K562 (cell line): ENCODE measurements at regions of chr4 and their contacts with region 1.

Region 1: GRCh38 chr4:151117371-151117962 is 18.0 kb downstream of the RPS3A start:
- DNase-seq: peak; percentile 56 to 69 (median 59)
- ATAC-seq: peak; percentile 85
- H3K4me3 ChIP-seq: no peak overlapping the region
- H3K27ac ChIP-seq: no peak overlapping the region
- H3K4me1 ChIP-seq: no peaks in the 10 kb centered on the region
- H3K27me3 ChIP-seq: no peaks in the 10 kb centered on the region; a peak in 1 of 5 replicates
- CTCF ChIP-seq: peak; percentile 57 to 87 (median 77)
- EP300 ChIP-seq: no peak
- POLR2A ChIP-seq: no peak
- RAD21 ChIP-seq: peak; percentile 71 to 78

Region 2: DNA sequence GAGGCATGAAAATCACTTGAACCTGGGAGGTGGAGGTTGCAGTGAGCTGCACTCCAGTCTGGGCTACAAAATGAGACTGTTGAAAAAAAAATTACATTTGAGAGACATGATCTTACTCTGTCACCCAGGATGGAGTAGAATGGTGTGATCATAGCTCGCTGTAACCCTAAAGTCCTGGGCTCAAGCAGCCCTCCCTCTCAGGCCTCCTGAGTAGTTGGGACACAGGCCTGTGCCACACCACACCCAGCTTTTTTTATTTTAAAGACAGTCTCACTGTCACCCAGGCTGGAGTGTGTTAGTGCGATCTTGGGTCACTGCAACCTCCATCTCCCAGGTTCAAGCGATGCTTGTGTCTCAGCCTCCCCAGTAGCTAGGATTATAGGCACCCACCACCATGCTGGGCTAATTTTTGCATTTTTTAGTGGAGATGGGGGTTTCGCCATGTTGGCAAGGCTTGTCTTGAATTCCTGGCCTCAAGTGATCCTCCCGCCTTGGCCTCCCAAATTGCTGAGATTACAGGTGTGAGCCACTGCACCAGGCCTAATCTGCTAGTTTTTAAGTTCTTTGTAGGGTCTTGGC is 11.9 kb before region 1 on chr4:
- CTCF ChIA-PET with region 1: no interaction called
- POLR2A ChIA-PET with region 1: interaction called, 20 read pairs
- in situ Hi-C with region 1: no loop called
- intact Hi-C with region 1: no loop called
- DNase-seq: peak in 1 of 4 experiments; percentile 25
- ATAC-seq: peak; percentile 51
- H3K4me3 ChIP-seq: no peak overlapping the region
- H3K27ac ChIP-seq: no peak overlapping the region
- H3K4me1 ChIP-seq: no peaks in the 10 kb centered on the region
- H3K27me3 ChIP-seq: no peaks in the 10 kb centered on the region
- CTCF ChIP-seq: no peak
- EP300 ChIP-seq: no peak
- POLR2A ChIP-seq: peak; percentile 63; the same call in 1 of the 2 replicates
- RAD21 ChIP-seq: no peak

Region 3: DNA sequence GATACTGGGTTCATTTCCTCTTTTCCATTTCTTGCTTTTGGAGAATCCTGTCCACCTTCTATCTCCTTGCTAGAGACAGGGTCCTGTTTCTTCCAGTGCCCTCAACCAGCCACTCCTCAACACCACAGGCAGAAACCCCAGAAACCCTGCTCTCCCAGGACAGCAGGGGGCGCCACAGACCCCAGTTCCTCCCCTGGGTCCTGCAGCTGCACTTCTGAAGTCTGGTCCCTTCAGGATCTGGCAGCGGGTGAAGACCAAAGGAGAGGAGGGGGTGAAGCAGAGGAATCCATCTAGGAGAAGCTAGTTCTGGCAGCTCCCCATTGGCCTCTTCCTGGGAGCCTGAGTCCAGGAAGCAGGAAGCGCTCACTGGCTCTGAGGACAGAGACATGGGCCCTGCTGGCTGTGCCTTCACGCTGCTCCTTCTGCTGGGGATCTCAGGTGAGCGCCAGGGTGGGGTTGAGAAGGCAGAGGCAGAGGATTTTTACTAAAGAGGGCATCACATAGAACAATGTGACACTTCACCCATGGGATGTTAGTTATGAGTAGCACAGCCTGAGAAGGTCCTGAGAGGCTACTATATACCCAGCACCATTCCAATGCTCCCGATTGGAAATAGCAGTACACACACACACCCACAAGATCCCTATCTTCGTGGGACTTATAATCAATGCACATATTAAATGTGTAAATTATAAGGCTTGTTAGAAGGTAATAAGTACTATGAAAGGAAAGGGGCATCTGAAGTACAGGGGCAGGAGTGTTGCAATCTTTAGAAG is 159.5 kb after region 1 on chr4 and contains the start of gene PRSS48:
- CTCF ChIA-PET with region 1: no interaction called
- POLR2A ChIA-PET with region 1: no interaction called
- in situ Hi-C with region 1: no loop called
- intact Hi-C with region 1: loop called (anchors 5 kb)
- DNase-seq: peak; percentile 62 to 69 (median 64)
- ATAC-seq: peak; percentile 99
- H3K4me3 ChIP-seq: no peak within 1 kb of the TSS
- H3K27ac ChIP-seq: no peak within 1 kb of the TSS
- H3K4me1 ChIP-seq: no peaks in the 10 kb centered on the region
- H3K27me3 ChIP-seq: peaks cover 3 to 4% of the 10 kb centered on the region in 2 experiments; a peak in 2 of 5 replicates
- CTCF ChIP-seq: peak; percentile 74 to 87 (median 79)
- EP300 ChIP-seq: no peak
- POLR2A ChIP-seq: no peak
- RAD21 ChIP-seq: peak; percentile 37 to 69
- polyA plus RNA-seq, gene PRSS48: not detected

Region 4: DNA sequence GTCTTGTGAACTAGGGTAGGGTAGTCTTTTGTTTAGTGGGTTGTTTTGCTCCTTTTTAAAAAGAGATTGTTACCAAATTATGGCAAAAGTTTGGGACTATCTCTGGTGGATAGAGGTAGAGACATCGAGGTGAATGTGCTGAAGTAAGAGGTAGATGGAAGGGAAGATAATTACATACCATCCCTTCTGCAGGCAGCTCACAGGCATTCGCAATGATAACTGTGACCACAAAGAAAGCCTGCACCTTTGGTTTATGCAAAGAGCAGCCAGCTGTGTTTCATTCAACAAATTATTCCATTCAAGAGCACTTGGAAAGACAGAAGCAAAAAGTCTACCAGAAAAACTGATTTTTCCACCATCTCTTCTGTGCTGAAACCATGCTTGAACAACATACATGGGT is 487.7 kb after region 1 on chr4:
- CTCF ChIA-PET with region 1: no interaction called
- POLR2A ChIA-PET with region 1: no interaction called
- in situ Hi-C with region 1: loop called (anchors 10 kb)
- intact Hi-C with region 1: loop called (anchors 5 kb)
- DNase-seq: no peak
- ATAC-seq: no peak
- H3K4me3 ChIP-seq: no peak overlapping the region
- H3K27ac ChIP-seq: no peak overlapping the region
- H3K4me1 ChIP-seq: no peaks in the 10 kb centered on the region
- H3K27me3 ChIP-seq: 0 out of 5 replicates have a peak, but pooled peaks cover 0 to 5% of the 10 kb centered on the region in 2 experiments
- CTCF ChIP-seq: no peak
- EP300 ChIP-seq: no peak
- POLR2A ChIP-seq: no peak
- RAD21 ChIP-seq: no peak

Region 5: DNA sequence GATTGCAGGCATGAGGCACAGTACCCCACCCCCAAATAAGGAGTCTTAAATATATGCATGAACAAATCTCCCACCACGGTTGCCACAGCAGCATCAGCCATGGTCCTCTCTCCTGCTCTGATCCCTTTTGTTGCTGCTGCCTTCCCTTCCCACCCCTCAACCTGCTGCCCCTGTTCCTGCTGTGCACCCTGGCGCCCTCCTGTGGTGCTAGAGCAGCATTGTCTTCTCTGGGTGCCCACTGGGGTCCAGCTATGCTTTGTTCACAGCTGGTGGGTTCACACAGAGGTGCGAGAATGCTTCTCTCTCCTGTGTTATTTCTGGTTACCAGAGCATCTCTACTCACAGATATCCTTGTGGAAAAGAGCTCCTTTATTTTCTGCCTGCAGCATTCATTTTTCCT is 527.2 kb after region 1 on chr4:
- CTCF ChIA-PET with region 1: no interaction called
- POLR2A ChIA-PET with region 1: no interaction called
- in situ Hi-C with region 1: no loop called
- intact Hi-C with region 1: loop called (anchors 10 kb)
- DNase-seq: peak; percentile 27 to 53 (median 35)
- ATAC-seq: peak; percentile 86
- H3K4me3 ChIP-seq: no peak overlapping the region
- H3K27ac ChIP-seq: no peak overlapping the region
- H3K4me1 ChIP-seq: no peaks in the 10 kb centered on the region
- H3K27me3 ChIP-seq: peaks cover 6 to 8% of the 10 kb centered on the region in 2 experiments
- CTCF ChIP-seq: peak; percentile 60 to 75 (median 74)
- EP300 ChIP-seq: no peak
- POLR2A ChIP-seq: no peak
- RAD21 ChIP-seq: peak; percentile 7 to 44; a peak in 2 of 4 replicates